ENCODE measurements at regions of chr2 and their contacts with region 1.

Region 1: GRCh38 chr2:101831351-101831865 is 133.9 kb downstream of the MAP4K4 start:
- DNase-seq: peak; percentile 72
- H3K4me3 Mint-ChIP-seq: no peak overlapping the region
- H3K27ac Mint-ChIP-seq: peak overlapping the region; percentile 3
- H3K4me1 Mint-ChIP-seq: peaks cover 29% of the 10 kb centered on the region
- H3K27me3 Mint-ChIP-seq: no peaks in the 10 kb centered on the region
- CTCF ChIP-seq: peak; percentile 65

Region 2: DNA sequence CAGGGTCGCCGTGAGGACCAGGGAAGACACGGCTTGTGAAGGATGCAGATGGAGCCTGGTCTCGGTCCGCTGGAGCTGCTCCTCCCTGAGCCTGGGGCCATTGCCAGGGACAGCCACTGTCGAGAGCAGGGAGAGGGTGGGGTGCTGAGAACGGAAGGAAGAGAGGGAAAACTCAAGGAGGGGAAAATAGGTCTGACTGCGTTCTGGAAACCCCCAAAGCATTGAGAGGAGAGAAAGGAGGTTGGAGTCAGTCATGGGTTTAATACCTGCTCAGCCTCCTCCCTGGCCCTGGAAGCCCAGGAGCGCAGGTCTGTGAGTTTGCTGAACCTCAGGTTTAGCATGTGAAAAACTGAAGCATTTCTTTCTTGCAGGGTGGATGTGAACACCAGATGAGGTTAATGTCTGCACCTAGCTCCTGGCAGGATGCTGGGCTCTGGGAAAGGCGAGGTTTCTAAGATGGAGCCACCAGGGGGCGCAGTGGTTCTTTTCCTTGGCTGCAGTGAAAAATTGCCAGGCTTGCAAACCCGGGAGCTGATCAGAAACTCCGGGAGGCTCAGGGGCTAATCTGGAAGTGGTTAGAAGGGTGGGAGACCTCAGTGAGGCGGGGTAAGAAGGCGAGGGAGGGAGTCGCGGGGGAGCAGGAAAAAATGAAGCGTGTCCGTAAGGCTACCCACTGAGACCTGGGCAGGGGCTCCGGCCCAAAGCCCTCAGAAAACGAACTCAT is 489.3 kb before region 1 on chr2:
- CTCF ChIA-PET with region 1: interaction called, 26 read pairs
- POLR2A ChIA-PET with region 1: interaction called, 3 read pairs
- intact Hi-C with region 1: loop called (anchors 2 kb)
- DNase-seq: peak; percentile 78
- H3K4me3 Mint-ChIP-seq: no peak overlapping the region
- H3K27ac Mint-ChIP-seq: no peak overlapping the region
- H3K4me1 Mint-ChIP-seq: peaks cover 5% of the 10 kb centered on the region
- H3K27me3 Mint-ChIP-seq: no peaks in the 10 kb centered on the region
- CTCF ChIP-seq: peak; percentile 78

Region 3: DNA sequence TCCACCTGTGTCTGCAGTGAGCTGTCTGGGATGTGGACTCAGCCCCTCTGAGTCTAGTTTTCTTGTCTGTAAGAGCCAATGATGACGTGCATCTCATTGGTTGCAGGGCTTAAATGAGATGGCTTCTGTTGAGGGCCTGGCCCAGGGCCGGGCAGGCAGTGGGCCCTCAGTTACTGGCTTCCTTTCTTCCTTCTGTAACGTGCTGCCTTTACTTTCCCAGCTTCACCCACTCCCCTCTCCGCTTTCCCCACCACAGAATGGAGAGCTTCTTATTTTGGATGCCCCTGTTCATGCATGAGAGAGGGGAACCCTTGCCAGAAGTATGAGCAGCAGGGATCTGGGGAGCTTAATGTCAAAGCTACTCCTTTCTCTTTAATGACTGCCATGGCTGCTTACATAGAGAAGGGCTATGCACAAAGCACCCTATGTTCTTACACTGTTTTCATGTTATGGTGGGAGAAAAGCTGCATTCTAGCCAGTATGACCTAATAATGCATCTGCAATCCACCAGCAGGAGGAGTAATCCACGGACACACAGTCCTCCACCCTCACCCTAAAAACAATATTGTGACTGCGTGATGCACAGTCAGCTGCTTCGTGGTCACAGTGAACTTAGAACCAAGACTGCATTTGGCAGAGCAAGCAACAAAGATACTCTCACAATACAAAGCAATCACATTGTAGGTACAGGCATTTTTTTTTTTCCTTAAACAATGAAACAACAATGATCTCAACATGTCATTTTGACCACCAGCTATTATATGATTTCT is 481.3 kb before region 1 on chr2:
- CTCF ChIA-PET with region 1: interaction called, 13 read pairs
- POLR2A ChIA-PET with region 1: no interaction called
- intact Hi-C with region 1: no loop called
- DNase-seq: peak; percentile 20
- H3K4me3 Mint-ChIP-seq: no peak overlapping the region
- H3K27ac Mint-ChIP-seq: no peak overlapping the region
- H3K4me1 Mint-ChIP-seq: peaks cover 6% of the 10 kb centered on the region
- H3K27me3 Mint-ChIP-seq: no peaks in the 10 kb centered on the region
- CTCF ChIP-seq: no peak

Region 4: GRCh38 chr2:101518578-101519492 is 312.6 kb before region 1 on chr2:
- CTCF ChIA-PET with region 1: interaction called, 37 read pairs
- POLR2A ChIA-PET with region 1: interaction called, 10 read pairs
- intact Hi-C with region 1: loop called (anchors 1 kb)
- DNase-seq: peak; percentile 81
- H3K4me3 Mint-ChIP-seq: peak overlapping the region; percentile 44
- H3K27ac Mint-ChIP-seq: no peak overlapping the region
- H3K4me1 Mint-ChIP-seq: peaks cover 25% of the 10 kb centered on the region
- H3K27me3 Mint-ChIP-seq: no peaks in the 10 kb centered on the region
- CTCF ChIP-seq: peak; percentile 30

Region 5: GRCh38 chr2:101630224-101630949 is 201.0 kb before region 1 on chr2:
- CTCF ChIA-PET with region 1: interaction called, 11 read pairs
- POLR2A ChIA-PET with region 1: interaction called, 5 read pairs
- intact Hi-C with region 1: no loop called
- DNase-seq: peak; percentile 99
- H3K4me3 Mint-ChIP-seq: no peak overlapping the region
- H3K27ac Mint-ChIP-seq: peak overlapping the region; percentile 89
- H3K4me1 Mint-ChIP-seq: peaks cover 13% of the 10 kb centered on the region
- H3K27me3 Mint-ChIP-seq: no peaks in the 10 kb centered on the region
- CTCF ChIP-seq: no peak

Region 6: DNA sequence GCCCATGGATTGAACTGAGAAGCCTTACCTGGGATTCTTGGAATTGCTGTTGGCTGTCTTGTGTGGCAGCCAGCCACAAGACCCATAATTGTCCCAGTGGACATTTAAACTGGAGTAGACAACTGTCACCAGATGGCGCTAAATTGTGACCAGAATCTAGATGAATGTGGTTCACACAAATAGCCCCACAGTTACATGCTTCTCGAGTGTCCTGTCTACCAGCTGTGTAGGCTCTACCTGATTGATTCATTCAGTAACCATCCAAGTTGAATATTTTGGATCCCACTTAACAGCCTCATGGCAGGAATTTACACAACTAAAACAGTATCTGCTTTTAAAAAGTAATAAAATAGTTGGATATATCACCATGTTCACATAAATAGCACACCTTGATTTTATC is 60.7 kb before region 1 on chr2:
- CTCF ChIA-PET with region 1: interaction called, 3 read pairs
- POLR2A ChIA-PET with region 1: interaction called, 3 read pairs
- intact Hi-C with region 1: loop called (anchors 2 kb)
- DNase-seq: peak; percentile 63
- H3K4me3 Mint-ChIP-seq: no peak overlapping the region
- H3K27ac Mint-ChIP-seq: peak overlapping the region; percentile 36
- H3K4me1 Mint-ChIP-seq: peaks cover 57% of the 10 kb centered on the region
- H3K27me3 Mint-ChIP-seq: no peaks in the 10 kb centered on the region
- CTCF ChIP-seq: peak; percentile 33

Region 7: DNA sequence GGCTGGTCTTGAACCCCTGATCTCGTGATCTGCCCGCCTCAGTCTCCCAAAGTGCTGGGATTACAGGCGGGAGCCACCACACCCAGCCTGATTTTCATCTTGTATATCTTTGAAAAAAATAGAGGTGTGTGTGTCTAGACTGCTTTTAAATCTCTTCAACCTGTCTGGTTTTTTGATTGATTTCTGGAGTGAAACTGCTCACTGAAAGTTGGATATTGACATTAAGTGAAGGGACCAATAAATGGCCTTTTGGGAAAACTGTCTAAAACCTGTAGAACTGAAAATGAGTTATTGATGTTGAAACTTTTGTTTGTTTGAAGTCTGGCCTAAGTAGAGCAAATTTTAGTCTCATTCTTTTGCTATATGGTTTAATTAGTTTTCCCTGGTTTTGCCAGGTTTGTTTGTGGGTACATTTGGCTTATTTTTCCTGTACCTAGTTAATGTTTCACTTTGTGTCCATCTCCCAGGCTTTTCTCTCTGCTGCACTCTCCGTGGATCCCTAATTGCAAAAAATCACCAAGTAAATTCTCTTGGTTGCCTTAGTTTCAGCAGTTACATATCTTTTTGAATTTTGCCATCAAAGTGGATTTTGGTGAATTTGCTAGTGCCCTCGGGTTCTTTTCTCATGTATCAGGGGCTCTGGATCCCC is 10.4 kb after region 1 on chr2:
- CTCF ChIA-PET with region 1: interaction called, 12 read pairs
- POLR2A ChIA-PET with region 1: no interaction called
- intact Hi-C with region 1: no loop called
- DNase-seq: no peak
- H3K4me3 Mint-ChIP-seq: no peak overlapping the region
- H3K27ac Mint-ChIP-seq: peak overlapping the region; percentile 6
- H3K4me1 Mint-ChIP-seq: peaks cover 34% of the 10 kb centered on the region
- H3K27me3 Mint-ChIP-seq: no peaks in the 10 kb centered on the region
- CTCF ChIP-seq: no peak

Region 8: GRCh38 chr2:102020596-102021181 is 189.3 kb after region 1 on chr2:
- CTCF ChIA-PET with region 1: no interaction called
- POLR2A ChIA-PET with region 1: no interaction called
- intact Hi-C with region 1: no loop called
- DNase-seq: peak; percentile 84
- H3K4me3 Mint-ChIP-seq: no peak overlapping the region
- H3K27ac Mint-ChIP-seq: no peak overlapping the region
- H3K4me1 Mint-ChIP-seq: peaks cover 18% of the 10 kb centered on the region
- H3K27me3 Mint-ChIP-seq: no peaks in the 10 kb centered on the region
- CTCF ChIP-seq: peak; percentile 98

Measured in MCF 10A (cell line).